Mammary epithelial cell (primary cell): ENCODE measurements at regions of chr5 and their contacts with region 1.

Region 1: DNA sequence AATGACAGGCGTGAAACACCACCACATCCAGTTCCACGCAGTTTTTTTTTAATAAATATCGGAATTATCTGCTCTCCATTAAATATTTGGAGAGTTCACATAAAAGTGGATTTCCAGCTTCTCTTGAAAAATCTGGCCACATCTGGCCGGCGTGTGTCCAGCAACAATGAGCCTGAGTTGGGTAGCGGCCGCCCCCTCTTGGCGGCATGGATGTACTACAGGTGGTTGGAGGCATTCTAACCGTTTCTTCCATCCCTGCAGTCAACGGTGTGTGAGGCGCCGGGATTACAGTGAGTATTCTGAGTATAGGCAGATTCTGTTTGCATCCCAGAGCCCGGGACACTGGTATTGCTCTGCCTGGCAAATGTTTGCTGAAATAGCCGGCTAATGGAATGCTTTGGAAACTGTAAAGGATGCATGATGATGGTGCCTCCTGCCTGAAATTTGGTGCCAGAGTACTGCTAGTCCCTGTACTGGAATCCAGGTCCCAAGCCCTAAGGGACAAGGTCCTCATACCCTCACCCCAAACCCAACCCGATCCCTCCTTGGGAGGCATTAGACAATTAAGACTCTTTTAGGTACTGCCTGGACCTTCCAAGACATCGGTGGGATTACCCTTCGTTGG is 13.6 kb upstream of the GM2A start:
- DNase-seq: no peak
- H3K4me3 ChIP-seq: no peak overlapping the region
- H3K27ac ChIP-seq: no peak overlapping the region
- H3K4me1 ChIP-seq: no peaks in the 10 kb centered on the region
- H3K27me3 ChIP-seq: peaks cover 2% of the 10 kb centered on the region
- CTCF ChIP-seq: peak; percentile 65 to 77

Region 2: DNA sequence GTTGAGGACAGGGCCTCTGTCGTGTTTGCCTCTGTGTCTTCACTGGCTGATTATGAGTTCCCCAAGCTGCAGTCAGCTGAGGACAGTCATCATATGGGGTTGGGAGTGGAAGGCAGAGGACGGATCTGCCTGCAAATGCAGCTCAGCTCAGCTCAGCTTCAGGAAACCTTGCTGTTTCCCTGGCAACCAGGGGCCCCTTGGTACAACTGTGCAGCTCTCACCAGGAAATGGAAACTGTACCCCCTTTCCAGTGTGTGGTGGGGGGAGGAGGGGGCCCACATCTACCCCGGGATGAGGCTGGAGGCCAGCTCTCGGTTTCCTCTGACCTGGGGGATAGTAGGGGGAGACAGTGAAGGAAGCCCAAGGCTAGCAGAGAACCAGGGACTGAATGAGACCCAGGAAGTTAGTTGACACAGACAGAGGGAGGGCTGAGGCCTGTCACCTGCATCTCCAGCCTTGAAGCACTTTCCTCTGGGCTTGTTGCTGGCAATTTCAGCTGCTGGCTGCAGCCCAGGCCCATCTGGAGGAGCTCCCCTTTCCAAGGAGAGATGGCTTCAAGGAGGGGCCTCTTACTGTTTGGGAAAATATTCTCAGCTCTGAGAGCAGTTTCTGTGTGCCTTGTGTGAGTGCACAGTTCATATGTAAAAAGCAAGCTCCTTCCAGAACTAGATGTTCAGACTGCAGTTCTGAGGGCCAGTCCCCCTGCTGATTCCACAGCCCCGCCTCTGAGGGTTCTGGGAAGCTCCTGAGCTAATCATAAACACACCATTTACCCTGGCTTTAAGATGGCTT is 88.7 kb before region 1 on chr5:
- CTCF ChIA-PET with region 1: no interaction called
- dilution Hi-C with region 1: loop called (anchors 5 kb)
- in situ Hi-C with region 1: no loop called
- intact Hi-C with region 1: no loop called
- DNase-seq: no peak
- H3K4me3 ChIP-seq: no peak overlapping the region
- H3K27ac ChIP-seq: no peak overlapping the region
- H3K4me1 ChIP-seq: peaks cover 5% of the 10 kb centered on the region
- H3K27me3 ChIP-seq: no peaks in the 10 kb centered on the region
- CTCF ChIP-seq: no peak

Region 3: DNA sequence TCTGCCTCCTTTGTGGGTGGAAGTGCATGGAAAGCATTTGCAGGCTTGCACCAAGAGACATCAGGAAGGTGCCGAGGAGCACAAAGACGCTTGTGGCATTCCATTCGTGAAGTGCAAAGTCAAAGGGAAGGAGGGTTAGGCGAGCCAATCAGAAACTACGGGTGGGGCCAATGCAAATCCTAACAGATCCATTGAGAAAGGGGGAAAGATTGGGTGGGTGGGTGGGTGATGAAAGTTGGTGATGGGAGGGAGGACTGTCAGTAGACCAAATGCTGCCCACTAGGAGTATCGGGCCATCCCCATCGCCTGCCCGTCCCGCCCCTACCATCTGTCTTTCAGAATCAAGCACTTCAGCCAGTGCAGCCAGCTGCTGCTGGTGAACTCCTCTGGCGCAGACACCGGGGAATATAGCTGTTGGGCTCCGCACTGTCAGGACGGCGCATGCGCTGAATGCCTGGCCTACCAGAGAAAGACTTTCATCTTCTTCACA is 64.7 kb before region 1 on chr5:
- CTCF ChIA-PET with region 1: no interaction called
- dilution Hi-C with region 1: no loop called
- in situ Hi-C with region 1: no loop called
- intact Hi-C with region 1: loop called (anchors 5 kb)
- DNase-seq: no peak
- H3K4me3 ChIP-seq: no peak overlapping the region
- H3K27ac ChIP-seq: no peak overlapping the region
- H3K4me1 ChIP-seq: no peaks in the 10 kb centered on the region
- H3K27me3 ChIP-seq: no peaks in the 10 kb centered on the region
- CTCF ChIP-seq: no peak

Region 4: DNA sequence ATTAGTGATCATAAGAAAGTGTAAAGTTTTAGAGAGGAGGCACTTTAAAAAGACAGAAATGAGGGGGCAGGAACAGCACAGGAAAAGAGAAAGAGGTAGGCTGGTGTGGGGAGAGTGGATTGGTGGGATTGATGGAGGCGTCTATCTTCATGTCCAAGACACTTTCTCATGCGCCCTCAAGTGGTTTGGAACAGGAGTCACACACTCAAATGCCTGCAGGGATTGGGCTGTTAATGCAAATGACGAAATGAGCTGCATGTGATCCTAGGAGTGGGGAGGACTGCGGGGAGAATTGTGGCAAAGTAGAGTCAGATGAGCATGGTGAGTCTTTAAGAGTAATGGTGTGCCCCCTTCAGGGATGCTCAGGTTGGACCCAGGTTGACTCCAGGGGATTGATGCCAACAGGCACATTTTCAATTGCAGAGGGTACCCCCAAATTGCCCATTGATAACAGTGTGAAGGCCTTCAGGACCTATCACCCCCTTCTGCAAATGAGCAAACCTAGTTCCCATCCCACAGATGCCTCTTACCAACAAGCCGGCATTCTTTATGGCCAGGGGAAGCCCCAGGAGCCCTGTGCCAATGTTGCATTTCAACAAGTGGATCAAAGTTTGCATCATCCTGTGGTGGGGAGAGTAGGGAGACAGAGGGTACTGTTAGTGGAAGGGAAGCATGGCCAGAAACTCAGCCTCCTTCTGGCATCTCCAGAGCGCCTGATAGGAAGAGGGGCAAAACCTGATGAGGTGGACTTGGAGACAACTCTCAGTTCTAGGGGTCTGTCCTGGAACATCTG is 58.9 kb after region 1 on chr5:
- CTCF ChIA-PET with region 1: no interaction called
- dilution Hi-C with region 1: no loop called
- in situ Hi-C with region 1: no loop called
- intact Hi-C with region 1: no loop called
- DNase-seq: peak; percentile 57
- H3K4me3 ChIP-seq: no peak overlapping the region
- H3K27ac ChIP-seq: no peak overlapping the region
- H3K4me1 ChIP-seq: peaks cover 18% of the 10 kb centered on the region
- H3K27me3 ChIP-seq: no peaks in the 10 kb centered on the region
- CTCF ChIP-seq: peak; percentile 61 to 71

Region 5: GRCh38 chr5:151686674-151687407 is 447.5 kb after region 1 on chr5 and contains the start of gene SPARC:
- CTCF ChIA-PET with region 1: no interaction called
- dilution Hi-C with region 1: no loop called
- in situ Hi-C with region 1: no loop called
- intact Hi-C with region 1: no loop called
- DNase-seq: peak; percentile 80
- H3K4me3 ChIP-seq: peak within 1 kb of the TSS; percentile 60 to 70 (median 62)
- H3K27ac ChIP-seq: peak within 1 kb of the TSS; percentile 81
- H3K4me1 ChIP-seq: peaks cover 42% of the 10 kb centered on the region
- H3K27me3 ChIP-seq: no peaks in the 10 kb centered on the region
- CTCF ChIP-seq: no peak
- total RNA-seq, gene SPARC: 222 to 382 TPM